Prostate gland (tissue), 2 donors: ENCODE measurements at regions of chr12 and their contacts with region 1.

Region 1: GRCh38 chr12:108640802-108641445 is 7.2 kb upstream of the SELPLG start:
- DNase-seq: no peak
- H3K4me3 ChIP-seq: no peak overlapping the region
- H3K27ac ChIP-seq: no peak overlapping the region
- H3K4me1 ChIP-seq: no peaks in the 10 kb centered on the region
- H3K27me3 ChIP-seq: no peaks in the 10 kb centered on the region
- CTCF ChIP-seq: no peak
- POLR2A ChIP-seq: no peak

Region 2: GRCh38 chr12:108744021-108744897 is 103.3 kb after region 1 on chr12:
- intact Hi-C with region 1: no loop called
- DNase-seq: no peak
- H3K4me3 ChIP-seq: no peak overlapping the region
- H3K27ac ChIP-seq: no peak overlapping the region
- H3K4me1 ChIP-seq: no peaks in the 10 kb centered on the region
- H3K27me3 ChIP-seq: no peaks in the 10 kb centered on the region
- CTCF ChIP-seq: no peak
- POLR2A ChIP-seq: no peak

Region 3: DNA sequence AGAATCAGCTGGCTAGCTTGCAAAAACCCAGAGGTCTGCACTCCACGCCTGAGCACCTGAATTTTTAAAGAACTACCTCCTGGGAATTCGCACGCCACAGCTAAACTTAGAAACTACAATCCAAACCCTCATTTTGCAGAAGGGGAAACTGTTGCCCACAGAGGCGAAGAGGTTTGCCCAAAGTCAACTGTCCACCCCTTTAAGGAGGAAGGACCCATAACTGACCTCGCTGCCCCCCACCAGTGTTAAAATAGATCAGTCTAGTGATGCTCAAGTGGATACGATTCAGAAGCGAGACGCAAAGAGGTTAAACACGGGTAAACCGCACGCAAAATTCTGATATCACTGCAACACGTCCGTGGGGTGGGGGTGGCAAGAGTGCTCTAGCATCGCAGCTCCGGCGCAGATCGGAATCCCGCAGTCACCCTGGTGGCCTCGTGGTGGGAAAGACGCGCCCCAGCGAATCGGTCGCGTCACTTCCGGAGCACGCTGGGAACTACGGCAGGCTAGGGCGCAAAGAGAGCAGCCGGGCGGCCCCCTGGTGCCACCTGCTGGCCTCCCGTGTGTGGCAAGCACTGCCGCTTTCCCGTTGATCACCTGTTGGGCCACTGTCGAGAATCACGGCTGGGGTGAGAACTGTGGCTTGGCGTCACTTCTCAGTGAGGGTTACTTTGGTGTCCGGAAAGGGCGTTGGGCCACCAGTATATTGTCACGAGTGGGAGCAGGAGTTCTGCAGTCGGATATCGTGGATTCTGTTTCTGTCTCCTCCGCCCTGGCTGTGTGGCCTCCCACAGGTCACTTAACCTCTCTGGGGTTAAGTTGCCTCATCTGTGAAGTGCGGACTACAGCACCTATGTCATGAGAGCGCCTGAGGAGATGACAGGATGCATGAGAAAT is 452.3 kb after region 1 on chr12 and contains the start of gene ALKBH2:
- intact Hi-C with region 1: loop called (anchors 10 kb)
- DNase-seq: peak; percentile 89
- H3K4me3 ChIP-seq: peak within 1 kb of the TSS; percentile 43 to 46
- H3K27ac ChIP-seq: peak within 1 kb of the TSS in 1 of 2 donors; percentile 55
- H3K4me1 ChIP-seq: no peaks in the 10 kb centered on the region
- H3K27me3 ChIP-seq: no peaks in the 10 kb centered on the region
- CTCF ChIP-seq: peak; percentile 94 to 99 (median 98)
- POLR2A ChIP-seq: no peak
- total RNA-seq, gene ALKBH2: 16.6 to 26.2 TPM